Activated CD8-positive, alpha-beta memory T cell treated with anti-CD3 and anti-CD28 coated beads, Interleukin-2, amount 10 ng/mL, durations not matched to agents 7 days and 5 days (primary cell): ENCODE measurements at regions of chr17 and their contacts with region 1.

Region 1: GRCh38 chr17:49260011-49260921 is 29.7 kb upstream of the PHOSPHO1 start:
- DNase-seq: peak; percentile 62
- ATAC-seq: peak; percentile 84
- H3K4me3 Mint-ChIP-seq: peak overlapping the region; percentile 71
- H3K27ac Mint-ChIP-seq: peak overlapping the region; percentile 46
- H3K4me1 Mint-ChIP-seq: peaks cover 12% of the 10 kb centered on the region
- H3K27me3 Mint-ChIP-seq: peaks cover 14% of the 10 kb centered on the region

Region 2: GRCh38 chr17:49230636-49231562 is 29.4 kb before region 1 on chr17 and contains the start of gene PHOSPHO1:
- CTCF ChIA-PET with region 1: interaction called, 11 read pairs
- DNase-seq: peak; percentile 90
- ATAC-seq: peak; percentile 91
- H3K4me3 Mint-ChIP-seq: peak within 1 kb of the TSS; percentile 62
- H3K27ac Mint-ChIP-seq: no peak within 1 kb of the TSS
- H3K4me1 Mint-ChIP-seq: peaks cover 34% of the 10 kb centered on the region
- H3K27me3 Mint-ChIP-seq: peaks cover 30% of the 10 kb centered on the region
- total RNA-seq, gene PHOSPHO1: not detected